ENCODE measurements at regions of chr13 and their contacts with region 1.

Region 1: DNA sequence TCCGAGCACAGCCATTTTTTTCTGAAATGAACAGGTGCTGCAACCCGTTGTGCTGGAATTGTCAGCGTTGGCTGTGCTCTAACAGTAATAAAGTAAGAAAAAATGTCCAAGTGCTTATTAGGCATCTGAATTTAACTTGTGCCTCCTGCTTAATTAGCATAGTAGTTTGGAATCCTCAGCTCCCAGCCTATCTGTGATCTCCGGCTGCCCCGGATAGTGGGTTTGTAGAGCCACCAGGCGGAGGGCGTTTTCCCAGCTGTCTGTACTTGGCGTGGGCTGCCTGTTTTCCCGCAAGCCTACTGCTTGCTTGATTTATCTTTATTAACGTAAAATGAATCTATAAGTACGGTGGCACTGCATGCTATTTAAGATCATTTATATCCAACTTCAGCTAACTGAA is 137.9 kb downstream of the MTUS2 start:
- DNase-seq: no peak

Region 2: DNA sequence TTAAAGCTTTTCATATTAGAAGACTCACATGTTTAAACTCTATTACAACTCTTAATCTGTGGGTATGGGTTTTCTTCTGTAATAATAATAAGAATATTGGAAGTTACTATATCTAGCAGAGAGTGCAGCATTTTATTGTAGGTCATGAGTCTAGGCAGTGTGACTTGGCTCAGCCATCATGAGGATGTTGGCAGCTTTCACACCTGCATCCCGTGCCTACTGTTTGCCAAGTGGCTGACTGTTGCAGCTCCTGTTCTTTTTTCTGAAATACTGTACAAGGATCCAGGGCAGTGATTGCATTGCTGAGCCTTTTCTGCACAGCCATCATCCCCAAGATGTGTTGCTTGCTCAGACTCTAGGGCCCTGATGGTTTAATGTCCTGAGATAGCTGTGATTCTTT is 90.5 kb before region 1 on chr13:
- intact Hi-C with region 1: loop called (anchors 5 kb)
- DNase-seq: no peak

Region 3: DNA sequence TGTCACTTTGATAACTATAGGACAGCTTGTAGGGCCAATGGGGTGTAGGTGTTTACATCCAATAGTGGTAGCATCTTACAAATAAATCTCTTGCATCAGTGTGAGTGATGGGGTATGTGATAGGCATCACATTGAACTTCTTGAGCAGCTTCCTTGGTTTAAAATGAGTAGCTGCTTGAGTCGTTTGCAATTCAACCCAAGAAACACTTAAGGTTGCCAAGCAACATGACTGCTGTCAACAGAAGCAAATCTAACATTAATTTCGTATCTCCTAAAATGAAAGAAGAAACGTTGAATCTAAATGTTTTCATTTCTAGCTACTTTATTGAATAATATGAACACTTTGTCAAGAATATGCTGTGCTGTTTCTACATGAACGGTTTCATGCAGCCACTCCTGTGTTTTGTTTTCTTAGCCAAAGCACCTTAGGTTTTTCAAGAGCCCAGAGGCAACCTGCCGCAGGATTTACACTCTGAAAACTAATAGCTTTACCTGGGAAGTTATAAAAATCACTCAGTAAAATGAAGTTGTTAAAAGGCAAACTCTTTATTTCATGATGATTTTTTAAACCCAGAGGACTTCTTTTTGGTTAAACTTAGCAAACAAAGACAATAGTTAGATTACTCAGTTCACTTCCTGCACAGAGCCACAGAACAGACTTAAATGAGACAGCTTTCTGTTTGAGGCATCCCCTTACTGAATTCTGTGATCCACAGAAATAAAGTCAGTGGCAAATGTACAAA is 167.3 kb after region 1 on chr13:
- intact Hi-C with region 1: no loop called
- DNase-seq: no peak

Measured in cardiac septum (tissue), 1 donor.